ENCODE measurements at regions of chr7 and their contacts with region 1.

Region 1: DNA sequence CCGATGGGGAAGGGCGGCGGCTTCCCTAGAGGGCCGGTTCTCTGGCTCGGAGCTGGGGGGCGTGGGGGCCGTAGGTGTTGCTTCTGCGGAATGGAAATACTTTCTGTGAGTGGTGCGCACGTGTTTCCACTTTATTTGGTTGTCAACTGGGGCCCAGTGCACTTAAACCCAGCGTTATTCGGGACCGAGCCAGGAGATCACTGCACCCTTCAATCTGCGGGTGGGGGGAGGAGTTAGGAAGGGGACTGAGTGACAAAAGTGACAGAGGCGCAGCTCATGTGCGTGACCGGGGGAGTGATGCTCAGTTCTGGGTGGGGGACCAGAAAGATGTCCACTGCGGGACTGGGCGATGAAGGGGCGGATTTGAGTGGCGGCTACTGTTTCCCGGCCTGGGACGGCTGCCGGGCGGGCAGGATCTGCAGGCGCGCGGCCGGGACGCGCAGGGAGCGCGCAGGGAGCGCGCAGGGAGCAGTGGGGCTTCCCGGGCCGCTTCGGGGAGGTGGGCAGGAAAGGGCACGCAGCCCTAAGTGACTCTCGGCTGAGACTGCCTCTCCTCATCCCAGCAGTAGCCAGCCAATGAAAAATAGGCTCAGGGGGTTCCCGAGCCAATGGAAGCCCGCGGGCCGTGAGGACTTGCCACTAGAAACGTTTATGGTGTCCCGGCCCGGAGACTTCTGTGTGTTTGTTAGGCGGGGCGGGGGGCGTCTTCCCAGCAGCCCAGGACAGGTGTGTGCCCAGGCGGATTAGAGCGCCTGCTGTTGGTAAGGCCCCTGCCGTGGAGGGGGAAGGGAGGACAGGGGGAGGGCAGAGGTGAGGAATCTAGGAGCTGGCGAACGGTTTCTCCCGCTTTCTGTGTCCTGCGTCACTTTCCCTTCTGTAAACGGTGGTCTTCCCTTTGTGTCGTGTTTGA is 54.3 kb upstream of the KDM7A start:
- DNase-seq: peak; percentile 13 to 73 (median 44)
- ATAC-seq: peak; percentile 30
- H3K4me3 ChIP-seq: peak overlapping the region; percentile 95
- H3K4me3 Mint-ChIP-seq: peak overlapping the region; percentile 84 to 99 (median 96)
- H3K27ac ChIP-seq: peak overlapping the region; percentile 91
- H3K27ac Mint-ChIP-seq: peak overlapping the region; percentile 95 to 100 (median 99)
- H3K4me1 ChIP-seq: peaks cover 16 to 21% of the 10 kb centered on the region in 2 donors
- H3K4me1 Mint-ChIP-seq: peaks cover 24 to 56% (median 51%) of the 10 kb centered on the region in 7 donors
- H3K27me3 ChIP-seq: no peaks in the 10 kb centered on the region
- H3K27me3 Mint-ChIP-seq: peaks cover 0 to 2% (median 0%) of the 10 kb centered on the region in 5 donors

Region 2: GRCh38 chr7:139767561-139767982 is 463.5 kb before region 1 on chr7:
- CTCF ChIA-PET with region 1: no interaction called
- POLR2A ChIA-PET with region 1: no interaction called
- intact Hi-C with region 1: loop called in 1 of 2 experiments (anchors 5 kb)
- DNase-seq: peak in 7 of 9 donors; percentile 30 to 77 (median 66)
- ATAC-seq: peak; percentile 76
- H3K4me3 ChIP-seq: peak overlapping the region; percentile 48
- H3K4me3 Mint-ChIP-seq: peak overlapping the region; percentile 43 to 88 (median 69)
- H3K27ac ChIP-seq: peak overlapping the region; percentile 66
- H3K27ac Mint-ChIP-seq: peak overlapping the region; percentile 80 to 97 (median 91)
- H3K4me1 ChIP-seq: peaks cover 33 to 60% of the 10 kb centered on the region in 2 donors
- H3K4me1 Mint-ChIP-seq: peaks cover 58 to 98% (median 90%) of the 10 kb centered on the region in 7 donors
- H3K27me3 ChIP-seq: no peaks in the 10 kb centered on the region
- H3K27me3 Mint-ChIP-seq: no peaks in the 10 kb centered on the region

Region 3: DNA sequence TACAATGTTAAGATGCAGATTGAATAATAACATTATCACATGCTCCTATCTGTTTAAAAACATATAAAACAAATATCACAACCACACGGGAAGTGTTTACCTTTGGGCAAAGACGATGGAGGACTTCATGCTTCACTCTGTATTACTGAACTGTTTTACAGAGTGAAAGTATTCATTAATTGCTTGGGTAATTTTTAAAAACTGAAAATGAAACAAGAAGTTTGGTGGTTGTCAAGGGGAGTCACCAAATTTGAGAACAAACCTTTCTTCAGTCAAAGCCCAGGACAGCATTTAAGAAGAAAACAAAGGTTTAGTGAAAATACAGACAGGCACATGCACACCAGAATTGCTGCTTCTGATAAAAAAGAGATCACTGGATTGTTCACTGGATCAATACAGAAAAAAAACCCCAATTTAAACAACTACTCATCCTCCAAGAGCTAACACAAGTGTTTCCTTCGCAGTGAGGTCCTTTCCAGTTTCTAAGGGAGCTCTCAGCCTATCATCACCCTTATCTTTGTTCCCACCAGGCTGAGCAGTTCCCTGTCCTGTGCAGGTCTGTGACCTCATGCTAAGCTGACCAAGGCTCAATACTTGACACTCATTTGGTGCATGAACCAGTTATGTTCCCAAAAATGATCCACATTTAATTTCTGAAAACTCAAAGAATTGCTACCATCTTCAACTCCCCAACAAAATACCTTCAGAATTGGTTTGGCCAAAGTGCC is 177.1 kb before region 1 on chr7:
- CTCF ChIA-PET with region 1: no interaction called
- POLR2A ChIA-PET with region 1: no interaction called
- intact Hi-C with region 1: no loop called
- DNase-seq: no peak
- ATAC-seq: no peak
- H3K4me3 ChIP-seq: no peak overlapping the region
- H3K4me3 Mint-ChIP-seq: peak overlapping the region in 2 of 10 donors; percentile 19 to 29
- H3K27ac ChIP-seq: no peak overlapping the region
- H3K27ac Mint-ChIP-seq: peak overlapping the region in 4 of 9 donors; percentile 14 to 77 (median 29)
- H3K4me1 ChIP-seq: peaks cover 9 to 13% of the 10 kb centered on the region in 2 donors
- H3K4me1 Mint-ChIP-seq: peaks cover 31 to 68% (median 62%) of the 10 kb centered on the region in 7 donors
- H3K27me3 ChIP-seq: no peaks in the 10 kb centered on the region
- H3K27me3 Mint-ChIP-seq: no peaks in the 10 kb centered on the region

Region 4: DNA sequence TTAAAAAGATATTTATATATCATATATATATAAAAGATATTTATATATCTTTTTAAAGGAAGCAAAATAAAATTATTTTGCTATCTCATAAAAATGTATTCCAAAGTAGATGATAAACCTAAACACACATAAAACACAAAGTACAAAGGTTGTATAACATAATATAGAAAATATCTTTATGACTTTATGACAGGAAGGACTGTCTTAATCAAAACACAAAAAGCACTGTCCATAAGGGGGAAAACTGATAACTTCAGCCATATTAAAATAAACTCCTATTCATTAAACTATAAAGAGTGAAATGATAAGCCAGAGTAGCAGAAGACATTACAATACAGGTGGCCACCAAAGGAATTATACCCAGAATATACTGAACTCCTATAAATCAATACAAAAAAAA is 89.1 kb before region 1 on chr7:
- CTCF ChIA-PET with region 1: no interaction called
- POLR2A ChIA-PET with region 1: interaction called, 4 read pairs
- intact Hi-C with region 1: loop called in 1 of 2 experiments (anchors 1 kb)
- DNase-seq: no peak
- ATAC-seq: no peak
- H3K4me3 ChIP-seq: no peak overlapping the region
- H3K4me3 Mint-ChIP-seq: peak overlapping the region in 1 of 10 donors; percentile 32
- H3K27ac ChIP-seq: no peak overlapping the region
- H3K27ac Mint-ChIP-seq: no peak overlapping the region
- H3K4me1 ChIP-seq: peaks cover 0 to 4% of the 10 kb centered on the region in 2 donors
- H3K4me1 Mint-ChIP-seq: peaks cover 20 to 82% (median 63%) of the 10 kb centered on the region in 7 donors
- H3K27me3 ChIP-seq: no peaks in the 10 kb centered on the region
- H3K27me3 Mint-ChIP-seq: no peaks in the 10 kb centered on the region

Region 5: GRCh38 chr7:140249036-140249806 is 18.1 kb after region 1 on chr7:
- CTCF ChIA-PET with region 1: no interaction called
- POLR2A ChIA-PET with region 1: interaction called, 3 read pairs
- intact Hi-C with region 1: loop called in 1 of 2 experiments (anchors 1 kb)
- DNase-seq: no peak
- ATAC-seq: no peak
- H3K4me3 ChIP-seq: no peak overlapping the region
- H3K4me3 Mint-ChIP-seq: no peak overlapping the region
- H3K27ac ChIP-seq: no peak overlapping the region
- H3K27ac Mint-ChIP-seq: no peak overlapping the region
- H3K4me1 ChIP-seq: peaks cover 0 to 21% of the 10 kb centered on the region in 2 donors
- H3K4me1 Mint-ChIP-seq: peaks cover 0 to 34% (median 5%) of the 10 kb centered on the region in 7 donors
- H3K27me3 ChIP-seq: no peaks in the 10 kb centered on the region
- H3K27me3 Mint-ChIP-seq: no peaks in the 10 kb centered on the region

Region 6: DNA sequence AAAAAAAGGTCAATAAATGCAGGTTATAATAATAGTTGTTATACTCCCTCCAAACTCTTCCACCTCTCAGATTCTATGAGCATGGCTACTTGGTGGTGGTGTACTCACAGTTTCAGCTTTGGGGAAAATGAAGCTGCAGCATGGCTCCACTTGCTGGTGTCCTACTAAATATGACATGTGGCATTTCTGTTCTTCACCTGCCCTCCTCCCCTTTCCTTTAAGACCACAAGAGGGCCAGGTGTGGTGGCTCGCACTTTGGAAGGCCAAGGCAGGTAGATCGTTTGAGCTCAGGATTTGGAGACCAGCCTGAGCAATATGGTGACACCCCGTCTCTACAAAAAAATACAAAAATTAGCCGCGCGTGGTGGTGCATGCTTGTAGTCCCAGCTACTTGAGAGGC is 66.1 kb after region 1 on chr7:
- CTCF ChIA-PET with region 1: no interaction called
- POLR2A ChIA-PET with region 1: interaction called, 4 read pairs
- intact Hi-C with region 1: loop called in 1 of 2 experiments (anchors 1 kb)
- DNase-seq: peak in 4 of 9 donors; percentile 11 to 30 (median 12)
- ATAC-seq: no peak
- H3K4me3 ChIP-seq: no peak overlapping the region
- H3K4me3 Mint-ChIP-seq: no peak overlapping the region
- H3K27ac ChIP-seq: no peak overlapping the region
- H3K27ac Mint-ChIP-seq: peak overlapping the region in 2 of 9 donors; percentile 9 to 20
- H3K4me1 ChIP-seq: no peaks in the 10 kb centered on the region
- H3K4me1 Mint-ChIP-seq: peaks cover 0 to 10% (median 4%) of the 10 kb centered on the region in 7 donors
- H3K27me3 ChIP-seq: no peaks in the 10 kb centered on the region
- H3K27me3 Mint-ChIP-seq: no peaks in the 10 kb centered on the region

Region 7: GRCh38 chr7:140390466-140391190 is 159.5 kb after region 1 on chr7:
- CTCF ChIA-PET with region 1: no interaction called
- POLR2A ChIA-PET with region 1: no interaction called
- intact Hi-C with region 1: loop called in 1 of 2 experiments (anchors 5 kb)
- DNase-seq: no peak
- ATAC-seq: peak; percentile 73
- H3K4me3 ChIP-seq: no peak overlapping the region
- H3K4me3 Mint-ChIP-seq: no peak overlapping the region
- H3K27ac ChIP-seq: no peak overlapping the region
- H3K27ac Mint-ChIP-seq: no peak overlapping the region
- H3K4me1 ChIP-seq: peaks cover 0 to 17% of the 10 kb centered on the region in 2 donors
- H3K4me1 Mint-ChIP-seq: peaks cover under 1 to 12% (median 1%) of the 10 kb centered on the region in 7 donors
- H3K27me3 ChIP-seq: no peaks in the 10 kb centered on the region
- H3K27me3 Mint-ChIP-seq: no peaks in the 10 kb centered on the region

Measured in naive thymus-derived CD4-positive, alpha-beta T cell (primary cell).